Mammary epithelial cell (primary cell): ENCODE measurements at regions of chr5 and their contacts with region 1.

Region 1: DNA sequence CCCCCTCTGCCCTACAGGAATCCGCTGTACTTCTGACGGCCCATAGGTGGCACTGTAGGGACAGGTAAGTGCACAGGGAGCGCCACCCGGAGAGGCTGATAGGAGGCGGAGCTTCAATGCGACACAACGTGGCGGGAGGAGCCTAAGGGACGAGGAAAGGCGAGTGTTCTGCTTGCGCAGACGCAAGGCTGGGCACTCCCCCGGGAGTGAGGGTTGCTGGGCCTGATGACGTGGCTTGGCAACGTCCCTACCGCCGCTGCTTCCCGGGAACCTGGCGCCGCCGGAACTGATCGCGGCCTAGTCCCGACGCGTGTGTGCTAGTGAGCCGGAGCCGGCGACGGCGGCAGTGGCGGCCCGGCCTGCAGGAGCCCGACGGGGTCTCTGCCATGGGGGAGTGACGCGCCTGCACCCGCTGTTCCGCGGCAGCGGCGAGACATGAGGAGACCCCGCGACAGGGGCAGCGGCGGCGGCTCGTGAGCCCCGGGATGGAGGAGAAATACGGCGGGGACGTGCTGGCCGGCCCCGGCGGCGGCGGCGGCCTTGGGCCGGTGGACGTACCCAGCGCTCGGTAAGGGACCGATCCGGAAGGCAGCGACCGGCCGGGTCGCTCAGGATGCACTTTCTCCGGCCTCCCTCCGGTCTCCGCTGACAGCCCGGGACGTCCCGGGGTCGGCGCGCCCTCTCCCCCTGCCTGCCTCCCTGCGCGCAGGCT is at the start of gene SLC30A5:
- DNase-seq: peak; percentile 99
- H3K4me3 ChIP-seq: peak within 1 kb of the TSS; percentile 82 to 88 (median 87)
- H3K27ac ChIP-seq: peak within 1 kb of the TSS; percentile 77
- H3K4me1 ChIP-seq: peaks cover 8% of the 10 kb centered on the region
- H3K27me3 ChIP-seq: no peaks in the 10 kb centered on the region
- CTCF ChIP-seq: peak; percentile 86 to 95
- total RNA-seq, gene SLC30A5: 47.8 to 48.5 TPM

Region 2: GRCh38 chr5:69024241-69024651 is 69.7 kb before region 1 on chr5:
- CTCF ChIA-PET with region 1: interaction called, 7 read pairs
- dilution Hi-C with region 1: no loop called
- in situ Hi-C with region 1: no loop called
- intact Hi-C with region 1: loop called (anchors 2 kb)
- DNase-seq: peak; percentile 39
- H3K4me3 ChIP-seq: no peak overlapping the region
- H3K27ac ChIP-seq: no peak overlapping the region
- H3K4me1 ChIP-seq: no peaks in the 10 kb centered on the region
- H3K27me3 ChIP-seq: no peaks in the 10 kb centered on the region
- CTCF ChIP-seq: peak; percentile 77 to 78

Region 3: GRCh38 chr5:69189162-69190086 is 95.5 kb after region 1 on chr5 and contains the start of gene CENPH:
- CTCF ChIA-PET with region 1: no interaction called
- dilution Hi-C with region 1: no loop called
- in situ Hi-C with region 1: no loop called
- intact Hi-C with region 1: loop called (anchors 1 kb)
- DNase-seq: peak; percentile 87
- H3K4me3 ChIP-seq: peak within 1 kb of the TSS; percentile 78 to 96 (median 85)
- H3K27ac ChIP-seq: peak within 1 kb of the TSS; percentile 94
- H3K4me1 ChIP-seq: peaks cover 7% of the 10 kb centered on the region
- H3K27me3 ChIP-seq: no peaks in the 10 kb centered on the region
- CTCF ChIP-seq: no peak
- total RNA-seq, gene CENPH: 3.3 to 26.3 TPM

Region 4: GRCh38 chr5:69334793-69335268 is 240.9 kb after region 1 on chr5:
- CTCF ChIA-PET with region 1: interaction called, 5 read pairs
- dilution Hi-C with region 1: no loop called
- in situ Hi-C with region 1: no loop called
- intact Hi-C with region 1: loop called (anchors 1 kb)
- DNase-seq: peak; percentile 62
- H3K4me3 ChIP-seq: no peak overlapping the region
- H3K27ac ChIP-seq: no peak overlapping the region
- H3K4me1 ChIP-seq: peaks cover 15% of the 10 kb centered on the region
- H3K27me3 ChIP-seq: no peaks in the 10 kb centered on the region
- CTCF ChIP-seq: peak; percentile 68 to 85

Region 5: DNA sequence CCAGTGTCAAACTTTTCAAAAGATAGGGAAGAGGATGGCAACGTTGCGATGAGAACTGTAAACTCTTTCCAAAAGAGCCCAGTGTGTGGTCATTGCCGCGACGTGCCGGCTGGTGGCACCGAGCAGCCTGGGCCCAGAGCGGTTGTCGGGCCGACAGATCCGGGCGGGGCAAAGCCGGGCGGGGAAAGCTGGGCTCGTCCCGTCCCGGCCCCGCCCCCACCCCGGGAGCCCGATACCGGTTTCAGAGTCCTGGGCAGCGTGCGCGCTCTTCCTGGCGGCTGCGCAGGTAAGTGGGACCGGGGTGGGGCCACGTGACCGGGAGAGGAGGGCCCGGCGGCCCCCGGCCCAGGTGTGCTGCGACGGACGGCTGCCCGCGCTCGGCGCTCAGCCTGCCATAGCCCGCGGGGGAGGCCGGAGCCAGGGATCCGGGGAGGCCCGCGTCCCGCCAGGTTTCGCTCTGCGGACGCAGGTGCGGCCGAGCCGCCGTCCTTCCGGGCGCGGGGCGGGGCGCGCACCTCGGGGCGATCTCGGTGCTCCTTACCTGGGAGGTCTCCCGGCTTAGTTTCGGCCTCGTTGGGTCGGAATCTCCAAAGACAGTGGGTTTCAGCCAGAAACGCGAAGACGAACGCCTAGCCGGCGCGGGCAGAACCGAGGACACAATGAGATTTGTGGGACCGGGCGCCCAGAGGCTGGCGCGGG is 321.1 kb after region 1 on chr5 and contains the start of gene MARVELD2:
- CTCF ChIA-PET with region 1: no interaction called
- dilution Hi-C with region 1: no loop called
- in situ Hi-C with region 1: no loop called
- intact Hi-C with region 1: loop called (anchors 2 kb)
- DNase-seq: peak; percentile 93
- H3K4me3 ChIP-seq: peak within 1 kb of the TSS; percentile 68 to 86 (median 77)
- H3K27ac ChIP-seq: peak within 1 kb of the TSS; percentile 95
- H3K4me1 ChIP-seq: peaks cover 12% of the 10 kb centered on the region
- H3K27me3 ChIP-seq: no peaks in the 10 kb centered on the region
- CTCF ChIP-seq: peak in 1 of 2 donors; percentile 74
- total RNA-seq, gene MARVELD2: 35.3 to 52.0 TPM